Naive thymus-derived CD8-positive, alpha-beta T cell (primary cell): ENCODE measurements at regions of chr19 and their contacts with region 1.

Region 1: GRCh38 chr19:38618590-38619360 is at the start of gene EIF3K:
- DNase-seq: peak; percentile 92 to 98 (median 96)
- ATAC-seq: peak; percentile 67 to 69
- H3K4me3 Mint-ChIP-seq: peak within 1 kb of the TSS; percentile 97 to 100 (median 99)
- H3K27ac Mint-ChIP-seq: peak within 1 kb of the TSS; percentile 97 to 100 (median 99)
- H3K4me1 Mint-ChIP-seq: peaks cover 33 to 60% (median 48%) of the 10 kb centered on the region in 4 donors
- H3K27me3 Mint-ChIP-seq: no peaks in the 10 kb centered on the region
- polyA plus RNA-seq, gene EIF3K: 400 to 435 (median 432) TPM

Region 2: GRCh38 chr19:38402967-38403861 is 215.6 kb before region 1 on chr19 and contains the start of gene FAM98C:
- POLR2A ChIA-PET with region 1: interaction called, 17 read pairs
- DNase-seq: peak; percentile 95 to 99 (median 98)
- ATAC-seq: peak; percentile 94 to 95
- H3K4me3 Mint-ChIP-seq: peak within 1 kb of the TSS; percentile 86 to 96 (median 93)
- H3K27ac Mint-ChIP-seq: peak within 1 kb of the TSS; percentile 82 to 98 (median 94)
- H3K4me1 Mint-ChIP-seq: peaks cover 9 to 23% (median 19%) of the 10 kb centered on the region in 4 donors
- H3K27me3 Mint-ChIP-seq: peaks cover 0 to 8% (median 0%) of the 10 kb centered on the region in 5 donors
- polyA plus RNA-seq, gene FAM98C: 12.6 to 15.5 (median 15.4) TPM

Region 3: DNA sequence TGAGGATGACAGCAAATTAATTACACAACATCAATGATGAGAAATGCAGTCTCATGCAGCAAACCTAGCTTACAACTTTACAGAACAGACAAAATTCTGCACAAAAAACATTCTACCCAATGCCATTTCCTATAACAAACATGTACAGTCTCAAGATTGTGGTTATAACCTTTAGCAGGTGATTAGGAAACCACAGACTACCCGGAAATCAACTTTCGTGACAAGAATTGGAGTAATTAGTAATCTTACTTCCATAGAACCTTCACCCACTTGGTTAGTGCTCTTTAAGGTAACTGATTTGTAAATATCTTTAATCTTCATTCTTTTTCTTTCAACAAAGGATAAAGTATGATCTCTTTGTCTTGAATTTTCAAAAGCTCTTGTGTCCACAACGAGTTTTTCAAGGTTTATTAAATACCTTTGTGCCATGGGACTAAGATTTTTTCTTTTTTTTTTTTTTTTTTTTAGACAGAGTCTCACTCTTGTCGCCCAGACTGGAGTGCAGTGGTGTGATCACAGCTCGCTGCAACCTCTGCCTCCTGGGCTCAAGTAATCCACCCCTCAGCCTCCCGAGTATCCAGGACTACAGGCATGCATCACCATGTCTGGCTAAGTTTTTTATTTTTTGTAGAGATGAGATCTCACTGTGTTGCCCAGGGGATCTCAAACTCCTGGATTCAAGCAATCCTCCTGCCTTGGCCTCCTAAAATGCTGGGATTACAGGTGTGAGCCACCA is 79.8 kb before region 1 on chr19:
- POLR2A ChIA-PET with region 1: interaction called, 18 read pairs
- DNase-seq: peak in 3 of 10 donors; percentile 50 to 69 (median 63)
- ATAC-seq: peak; percentile 93 to 94
- H3K4me3 Mint-ChIP-seq: peak overlapping the region; percentile 12 to 82 (median 70)
- H3K27ac Mint-ChIP-seq: peak overlapping the region; percentile 27 to 98 (median 78)
- H3K4me1 Mint-ChIP-seq: peaks cover 14 to 37% (median 28%) of the 10 kb centered on the region in 4 donors
- H3K27me3 Mint-ChIP-seq: peaks cover 0 to 4% (median 0%) of the 10 kb centered on the region in 5 donors

Region 4: GRCh38 chr19:38634757-38635482 is 16.1 kb after region 1 on chr19:
- POLR2A ChIA-PET with region 1: interaction called, 11 read pairs
- DNase-seq: peak; percentile 42 to 83 (median 69)
- ATAC-seq: peak; percentile 27 to 34
- H3K4me3 Mint-ChIP-seq: peak overlapping the region in 7 of 10 donors; percentile 2 to 64 (median 50)
- H3K27ac Mint-ChIP-seq: peak overlapping the region in 7 of 10 donors; percentile 3 to 88 (median 64)
- H3K4me1 Mint-ChIP-seq: peaks cover 11 to 35% (median 30%) of the 10 kb centered on the region in 4 donors
- H3K27me3 Mint-ChIP-seq: no peaks in the 10 kb centered on the region

Region 5: GRCh38 chr19:38647368-38647965 is 28.7 kb after region 1 on chr19 and contains the start of gene ACTN4:
- POLR2A ChIA-PET with region 1: interaction called, 18 read pairs
- DNase-seq: peak; percentile 99 to 100 (median 100)
- ATAC-seq: peak; percentile 88 to 94
- H3K4me3 Mint-ChIP-seq: peak within 1 kb of the TSS; percentile 86 to 95 (median 91)
- H3K27ac Mint-ChIP-seq: peak within 1 kb of the TSS; percentile 37 to 94 (median 86)
- H3K4me1 Mint-ChIP-seq: peaks cover 17 to 50% (median 28%) of the 10 kb centered on the region in 4 donors
- H3K27me3 Mint-ChIP-seq: peaks cover 12 to 47% (median 31%) of the 10 kb centered on the region in 5 donors
- polyA plus RNA-seq, gene ACTN4: 3.2 to 8.5 (median 4.8) TPM

Region 6: DNA sequence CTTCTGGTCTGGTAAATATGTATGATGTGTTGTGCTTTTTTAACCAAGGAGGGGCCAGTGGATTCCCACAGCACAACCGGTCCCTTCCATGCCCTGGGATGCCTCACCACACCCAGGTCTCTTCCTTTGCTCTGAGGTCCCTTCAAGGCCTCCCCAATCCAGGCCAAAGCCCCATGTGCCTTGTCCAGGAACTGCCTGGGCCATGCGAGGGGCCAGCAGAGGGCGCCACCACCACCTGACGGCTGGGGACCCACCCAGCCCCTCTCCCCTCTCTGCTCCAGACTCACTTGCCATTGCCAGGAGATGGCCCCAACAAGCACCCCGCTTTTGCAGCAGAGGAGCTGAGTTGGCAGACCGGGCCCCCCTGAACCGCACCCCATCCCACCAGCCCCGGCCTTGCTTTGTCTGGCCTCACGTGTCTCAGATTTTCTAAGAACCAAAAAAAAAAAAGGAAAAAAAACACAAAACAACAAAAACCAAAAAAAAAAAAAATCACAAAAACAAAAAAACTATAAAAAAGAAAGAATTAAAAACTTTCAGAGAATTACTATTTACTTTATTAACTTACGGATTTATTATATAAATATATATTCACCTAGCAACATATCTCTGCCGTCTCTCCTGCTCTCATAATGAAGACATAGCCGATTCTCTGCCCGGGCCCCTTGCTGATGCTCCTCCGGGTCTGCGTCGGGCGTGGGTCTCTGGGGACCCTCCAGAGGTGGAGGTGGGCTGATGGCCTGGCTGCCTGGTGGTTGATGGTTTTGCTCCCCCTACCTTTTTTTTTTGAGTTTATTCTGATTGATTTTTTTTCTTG is 111.1 kb after region 1 on chr19:
- POLR2A ChIA-PET with region 1: no interaction called
- DNase-seq: peak; percentile 61 to 88 (median 76)
- ATAC-seq: peak; percentile 82 to 83
- H3K4me3 Mint-ChIP-seq: no peak overlapping the region
- H3K27ac Mint-ChIP-seq: peak overlapping the region in 4 of 10 donors; percentile 27 to 61 (median 50)
- H3K4me1 Mint-ChIP-seq: peaks cover 6 to 38% (median 32%) of the 10 kb centered on the region in 4 donors
- H3K27me3 Mint-ChIP-seq: no peaks in the 10 kb centered on the region

Region 7: GRCh38 chr19:38929929-38930775 is 311.4 kb after region 1 on chr19 and contains the start of gene SARS2:
- POLR2A ChIA-PET with region 1: interaction called, 13 read pairs
- DNase-seq: peak; percentile 88 to 100 (median 92)
- ATAC-seq: peak; percentile 62 to 64
- H3K4me3 Mint-ChIP-seq: peak within 1 kb of the TSS; percentile 96 to 99 (median 98)
- H3K27ac Mint-ChIP-seq: peak within 1 kb of the TSS; percentile 95 to 100 (median 100)
- H3K4me1 Mint-ChIP-seq: peaks cover 14 to 48% (median 42%) of the 10 kb centered on the region in 4 donors
- H3K27me3 Mint-ChIP-seq: no peaks in the 10 kb centered on the region
- polyA plus RNA-seq, gene SARS2: 8.8 to 14.9 (median 14.3) TPM